Gastrocnemius medialis (tissue), 4 donors: ENCODE measurements at regions of chr15 and their contacts with region 1.

Region 1: GRCh38 chr15:75578948-75579920 is at the start of gene PTPN9:
- DNase-seq: peak; percentile 64 to 68
- ATAC-seq: peak; percentile 88 to 91
- H3K4me3 ChIP-seq: peak within 1 kb of the TSS; percentile 71 to 96 (median 82)
- H3K27ac ChIP-seq: peak within 1 kb of the TSS; percentile 80 to 92 (median 82)
- H3K4me1 ChIP-seq: peaks cover 11 to 18% of the 10 kb centered on the region in 2 donors
- H3K27me3 ChIP-seq: no peaks in the 10 kb centered on the region
- CTCF ChIP-seq: peak in 3 of 5 experiments; percentile 8 to 72 (median 69)
- POLR2A ChIP-seq: peak; percentile 24 to 45
- total RNA-seq, gene PTPN9: 4.8 to 7.0 (median 6.2) TPM

Region 2: DNA sequence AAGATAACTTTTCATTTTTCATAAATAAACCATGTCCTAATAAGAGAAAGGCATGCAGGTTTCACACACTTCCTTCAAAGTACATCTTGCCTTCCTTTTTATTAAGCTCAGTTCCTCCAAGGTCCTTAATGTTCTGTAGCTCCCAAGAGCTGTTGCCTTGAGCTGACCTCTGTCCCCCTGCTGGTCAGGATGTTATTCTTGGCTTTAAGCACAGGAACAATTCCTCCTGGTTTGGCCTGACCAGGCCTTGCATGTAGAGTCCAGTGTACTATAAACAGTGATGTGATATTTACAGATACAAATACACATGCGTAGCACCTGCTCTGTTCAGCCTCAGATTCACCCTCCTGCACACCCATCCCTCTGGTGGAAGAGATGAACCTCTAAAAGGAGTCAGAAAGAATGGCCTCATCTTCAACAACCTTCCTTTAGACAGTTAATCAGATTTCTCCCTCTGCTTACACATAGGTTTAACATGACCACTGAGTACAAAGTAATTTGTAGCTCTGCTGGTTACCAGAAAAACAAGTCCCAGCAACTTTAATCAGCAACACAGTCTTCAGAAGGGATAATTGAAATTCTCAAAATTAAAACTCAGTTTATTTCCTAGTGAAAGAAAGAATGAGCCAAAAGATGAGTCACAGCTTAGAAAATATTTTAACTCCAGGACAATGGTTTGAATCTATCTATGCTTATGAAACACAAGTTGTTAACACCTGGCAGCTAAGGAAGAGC is 46.7 kb before region 1 on chr15:
- in situ Hi-C with region 1: no loop called
- intact Hi-C with region 1: loop called (anchors 2 kb)
- DNase-seq: peak; percentile 52 to 77
- ATAC-seq: peak; percentile 95
- H3K4me3 ChIP-seq: no peak overlapping the region
- H3K27ac ChIP-seq: peak overlapping the region; percentile 56 to 71 (median 68)
- H3K4me1 ChIP-seq: peaks cover 31 to 32% of the 10 kb centered on the region in 2 donors
- H3K27me3 ChIP-seq: no peaks in the 10 kb centered on the region
- CTCF ChIP-seq: peak; percentile 12 to 50 (median 43)
- POLR2A ChIP-seq: no peak